ENCODE measurements at regions of chr7 and their contacts with region 1.

Region 1: GRCh38 chr7:78704504-78704903 is 749.0 kb downstream of the MAGI2 start:
- DNase-seq: no peak

Region 2: DNA sequence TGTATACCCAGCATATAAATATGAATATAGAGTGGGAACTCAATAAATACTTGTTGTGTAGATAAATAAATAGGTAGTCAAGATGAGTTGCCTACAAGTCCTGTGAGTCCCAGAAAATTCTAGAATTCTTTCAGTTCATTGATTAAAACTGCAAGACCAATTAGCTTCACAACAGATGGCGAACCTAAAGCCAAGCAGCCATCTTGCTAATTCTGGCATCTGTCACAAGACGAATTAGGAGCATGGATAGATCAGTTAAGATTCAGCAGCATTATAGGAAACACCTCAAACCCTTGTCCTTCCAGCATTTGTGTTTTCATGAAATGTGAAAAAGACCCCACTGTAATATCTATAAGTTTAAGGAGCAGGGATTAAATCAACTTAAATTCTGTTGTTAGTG is 196.3 kb after region 1 on chr7:
- intact Hi-C with region 1: loop called in 1 of 2 experiments (anchors 2 kb)
- DNase-seq: no peak